Endothelial cell of umbilical vein (primary cell): ENCODE measurements at regions of chr18 and their contacts with region 1.

Region 1: DNA sequence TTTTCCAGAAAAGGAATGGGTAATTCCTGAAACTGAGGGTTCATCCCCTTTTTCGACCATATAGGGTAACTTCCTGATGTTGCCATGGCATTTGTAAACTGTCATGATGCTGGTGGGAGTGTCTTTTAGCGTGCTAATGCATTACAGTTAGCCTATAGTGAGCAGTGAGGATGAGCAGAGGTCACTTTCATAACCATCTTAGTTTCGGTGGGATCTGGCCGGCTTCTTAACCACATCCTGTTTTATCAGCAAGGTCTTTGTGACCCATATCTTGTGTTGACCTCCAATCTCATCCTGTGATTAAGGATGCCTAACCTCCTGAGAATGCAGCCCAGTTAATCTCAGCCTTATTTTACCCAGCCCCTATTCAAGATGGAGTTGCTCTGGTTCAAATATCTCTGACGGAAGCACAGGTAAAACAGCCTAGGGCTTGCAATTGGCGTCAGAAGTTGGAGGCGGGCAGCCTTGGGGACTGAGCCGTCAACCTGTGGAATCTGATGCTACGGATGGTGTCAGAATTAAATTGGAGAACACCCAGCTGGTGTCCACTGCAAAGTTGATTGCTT is 19.5 kb downstream of the RALBP1 start:
- DNase-seq: no peak
- H3K4me3 ChIP-seq: no peak overlapping the region
- H3K27ac ChIP-seq: no peak overlapping the region
- H3K4me1 ChIP-seq: no peaks in the 10 kb centered on the region
- H3K27me3 ChIP-seq: no peaks in the 10 kb centered on the region
- CTCF ChIP-seq: no peak
- POLR2A ChIP-seq: no peak

Region 2: DNA sequence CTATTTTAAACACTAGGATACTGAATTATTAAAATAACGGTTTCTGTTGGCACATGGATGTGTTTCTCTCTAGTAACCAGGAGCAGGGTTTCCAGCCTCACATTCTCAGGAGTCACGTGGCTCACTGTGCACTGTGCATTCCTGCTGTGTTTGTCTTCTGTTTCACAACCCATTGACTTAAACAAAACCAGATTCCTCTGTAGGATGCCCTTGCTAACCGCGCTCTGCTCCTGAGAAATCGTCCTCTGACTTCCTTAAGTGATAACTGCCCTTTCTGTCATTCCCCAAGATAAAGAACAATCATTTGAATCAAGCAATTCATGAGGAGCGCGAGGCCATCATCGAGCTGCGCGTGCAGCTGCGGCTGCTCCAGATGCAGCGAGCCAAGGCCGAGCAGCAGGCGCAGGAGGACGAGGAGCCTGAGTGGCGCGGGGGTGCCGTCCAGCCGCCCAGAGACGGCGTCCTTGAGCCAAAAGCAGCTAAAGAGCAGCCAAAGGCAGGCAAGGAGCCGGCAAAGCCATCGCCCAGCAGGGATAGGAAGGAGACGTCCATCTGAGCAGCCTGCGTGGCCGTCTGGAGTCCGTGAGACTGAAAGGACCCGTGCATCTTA is 40.6 kb after region 1 on chr18:
- CTCF ChIA-PET with region 1: no interaction called
- POLR2A ChIA-PET with region 1: no interaction called
- dilution Hi-C with region 1: no loop called
- intact Hi-C with region 1: no loop called
- DNase-seq: no peak
- H3K4me3 ChIP-seq: no peak overlapping the region
- H3K27ac ChIP-seq: no peak overlapping the region
- H3K4me1 ChIP-seq: peaks cover 8% of the 10 kb centered on the region
- H3K27me3 ChIP-seq: no peaks in the 10 kb centered on the region
- CTCF ChIP-seq: no peak
- POLR2A ChIP-seq: no peak

Region 3: DNA sequence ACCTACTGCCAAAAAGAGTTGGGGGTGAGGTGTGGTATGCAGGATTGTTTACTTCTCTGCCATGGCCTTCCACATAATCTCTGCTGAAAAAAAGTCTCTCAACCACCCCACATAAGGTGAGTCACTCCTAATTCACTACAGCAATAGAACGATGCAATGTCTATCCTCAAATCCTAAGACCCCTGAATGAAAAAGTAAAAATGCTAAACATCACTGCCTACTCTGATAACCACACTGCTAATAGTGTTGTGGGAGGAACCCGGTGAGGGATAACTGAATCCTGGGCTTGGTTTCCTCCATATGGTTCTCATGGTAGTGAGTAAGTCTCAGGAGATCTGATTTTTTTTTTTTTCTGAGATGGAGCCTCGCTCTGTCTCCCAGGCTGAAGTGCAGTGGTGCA is 1402.0 kb after region 1 on chr18:
- CTCF ChIA-PET with region 1: no interaction called
- POLR2A ChIA-PET with region 1: no interaction called
- dilution Hi-C with region 1: no loop called
- intact Hi-C with region 1: loop called (anchors 5 kb)
- DNase-seq: no peak
- H3K4me3 ChIP-seq: no peak overlapping the region
- H3K27ac ChIP-seq: no peak overlapping the region
- H3K4me1 ChIP-seq: no peaks in the 10 kb centered on the region
- H3K27me3 ChIP-seq: no peaks in the 10 kb centered on the region
- CTCF ChIP-seq: no peak
- POLR2A ChIP-seq: no peak